Ascending aorta (tissue), 2 donors: ENCODE measurements at regions of chrX and their contacts with region 1.

Region 1: GRCh38 chrX:81201671-81202455 is at the starts of genes HMGN5 and SH3BGRL:
- DNase-seq: peak; percentile 18 to 87
- H3K4me3 ChIP-seq: peak within 1 kb of the TSS; percentile 47 to 79
- H3K27ac ChIP-seq: peak within 1 kb of the TSS; percentile 75 to 80
- H3K4me1 ChIP-seq: no peaks in the 10 kb centered on the region
- H3K27me3 ChIP-seq: no peaks in the 10 kb centered on the region
- CTCF ChIP-seq: no peak
- total RNA-seq, gene HMGN5: not detected
- total RNA-seq, gene SH3BGRL: 91.9 TPM

Region 2: DNA sequence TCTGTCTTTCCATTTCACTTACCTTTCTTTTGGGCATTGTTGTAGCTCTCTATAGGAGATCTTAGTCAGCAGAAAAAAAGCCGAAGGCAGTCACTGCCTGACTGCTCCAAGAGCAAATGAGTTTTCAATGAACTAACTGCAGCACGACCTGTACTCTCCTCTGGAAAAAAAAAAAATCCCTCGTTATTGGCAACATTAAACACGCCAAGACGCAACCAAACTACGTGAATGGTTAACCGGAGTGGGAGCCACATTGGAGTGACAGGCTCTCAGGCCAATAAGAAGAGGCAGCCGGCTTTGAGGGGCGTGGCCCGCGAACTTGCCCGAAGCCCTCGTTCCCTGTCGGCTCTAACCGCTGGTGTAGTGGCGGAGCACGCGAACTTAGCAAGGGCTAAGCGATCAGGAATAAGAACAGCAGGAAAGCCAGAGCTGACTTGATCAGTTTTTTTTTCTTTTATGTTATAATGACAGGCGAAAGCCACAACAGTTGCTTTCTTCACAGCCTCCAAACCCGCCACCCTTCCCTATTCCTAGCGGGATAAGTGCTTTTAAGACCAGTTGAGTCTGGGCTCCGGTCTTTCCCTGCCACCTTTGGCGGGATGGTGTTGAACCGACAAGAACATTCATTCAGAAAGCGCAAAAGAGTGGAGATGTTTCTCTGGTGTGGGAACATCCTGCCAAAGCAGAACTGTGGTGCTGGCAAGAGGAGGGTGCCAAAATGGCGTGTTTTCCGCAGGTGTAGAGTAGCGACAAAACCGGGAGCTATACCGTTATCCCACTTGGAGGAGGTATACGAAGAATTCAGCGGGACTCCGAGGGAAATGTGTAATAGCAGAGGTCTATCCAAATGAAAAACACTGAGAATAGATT is 80.1 kb before region 1 on chrX:
- intact Hi-C with region 1: loop called (anchors 2 kb)
- DNase-seq: peak; percentile 59 to 94
- H3K4me3 ChIP-seq: peak overlapping the region; percentile 42 to 57
- H3K27ac ChIP-seq: peak overlapping the region; percentile 6 to 52
- H3K4me1 ChIP-seq: no peaks in the 10 kb centered on the region
- H3K27me3 ChIP-seq: no peaks in the 10 kb centered on the region
- CTCF ChIP-seq: no peak

Region 3: DNA sequence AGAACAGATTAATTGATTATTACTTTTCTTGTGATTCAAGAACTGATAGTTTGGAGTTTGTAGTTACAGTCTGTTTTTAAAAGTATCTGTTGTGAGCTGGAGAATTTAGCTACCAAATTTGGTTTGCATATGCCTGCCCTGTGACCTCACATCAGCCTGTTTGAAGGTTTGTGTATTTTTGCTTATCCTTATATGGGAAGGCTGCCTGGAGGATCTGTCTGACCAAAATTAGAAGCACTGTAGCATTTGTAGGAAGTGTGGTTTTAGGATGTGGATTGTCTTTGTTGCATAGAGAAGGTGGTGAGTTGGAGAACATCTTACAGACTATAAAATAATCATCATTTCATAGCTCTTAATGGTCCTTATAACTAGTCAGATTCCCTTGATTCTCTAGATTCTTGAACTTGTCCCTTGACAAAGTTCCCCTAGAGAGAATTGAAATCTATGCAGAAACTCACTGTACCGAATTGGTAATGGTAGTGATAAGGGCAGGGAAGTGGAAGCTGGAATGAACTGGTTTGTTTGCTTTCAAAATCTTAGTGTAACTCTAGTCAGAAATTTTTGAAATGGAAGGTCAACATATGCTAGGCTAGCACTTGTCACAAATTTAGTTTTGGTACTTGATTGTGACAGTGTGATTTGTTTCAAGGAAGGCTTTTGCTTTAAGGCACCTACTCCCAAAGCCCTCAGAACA is 57.3 kb after region 1 on chrX:
- intact Hi-C with region 1: loop called (anchors 5 kb)
- DNase-seq: no peak
- H3K4me3 ChIP-seq: peak overlapping the region in 1 of 2 donors; percentile 7
- H3K27ac ChIP-seq: peak overlapping the region; percentile 78 to 81
- H3K4me1 ChIP-seq: peaks cover 4 to 12% of the 10 kb centered on the region in 2 donors
- H3K27me3 ChIP-seq: no peaks in the 10 kb centered on the region
- CTCF ChIP-seq: no peak

Region 4: DNA sequence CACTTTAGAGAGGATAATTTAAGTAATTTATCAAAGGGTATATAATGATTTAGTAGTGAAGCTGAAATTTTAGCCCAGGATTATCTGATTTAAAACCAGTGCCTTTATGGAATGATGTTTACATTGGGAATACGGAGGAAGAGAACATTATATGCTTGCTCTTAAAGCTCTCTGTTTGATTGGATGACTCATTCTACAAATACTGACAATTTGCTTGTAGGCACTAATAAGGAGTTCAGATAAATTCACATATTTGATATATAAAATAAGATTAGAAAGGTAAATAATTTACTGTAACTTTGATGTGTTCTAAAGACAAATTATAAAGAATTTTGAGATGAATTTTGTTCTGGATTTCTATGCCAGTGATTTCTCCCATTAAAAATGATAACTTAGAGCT is 84.8 kb after region 1 on chrX:
- intact Hi-C with region 1: no loop called
- DNase-seq: no peak
- H3K4me3 ChIP-seq: no peak overlapping the region
- H3K27ac ChIP-seq: no peak overlapping the region
- H3K4me1 ChIP-seq: no peaks in the 10 kb centered on the region
- H3K27me3 ChIP-seq: no peaks in the 10 kb centered on the region
- CTCF ChIP-seq: no peak